Mammary epithelial cell (primary cell): ENCODE measurements at regions of chr11 and their contacts with region 1.

Region 1: DNA sequence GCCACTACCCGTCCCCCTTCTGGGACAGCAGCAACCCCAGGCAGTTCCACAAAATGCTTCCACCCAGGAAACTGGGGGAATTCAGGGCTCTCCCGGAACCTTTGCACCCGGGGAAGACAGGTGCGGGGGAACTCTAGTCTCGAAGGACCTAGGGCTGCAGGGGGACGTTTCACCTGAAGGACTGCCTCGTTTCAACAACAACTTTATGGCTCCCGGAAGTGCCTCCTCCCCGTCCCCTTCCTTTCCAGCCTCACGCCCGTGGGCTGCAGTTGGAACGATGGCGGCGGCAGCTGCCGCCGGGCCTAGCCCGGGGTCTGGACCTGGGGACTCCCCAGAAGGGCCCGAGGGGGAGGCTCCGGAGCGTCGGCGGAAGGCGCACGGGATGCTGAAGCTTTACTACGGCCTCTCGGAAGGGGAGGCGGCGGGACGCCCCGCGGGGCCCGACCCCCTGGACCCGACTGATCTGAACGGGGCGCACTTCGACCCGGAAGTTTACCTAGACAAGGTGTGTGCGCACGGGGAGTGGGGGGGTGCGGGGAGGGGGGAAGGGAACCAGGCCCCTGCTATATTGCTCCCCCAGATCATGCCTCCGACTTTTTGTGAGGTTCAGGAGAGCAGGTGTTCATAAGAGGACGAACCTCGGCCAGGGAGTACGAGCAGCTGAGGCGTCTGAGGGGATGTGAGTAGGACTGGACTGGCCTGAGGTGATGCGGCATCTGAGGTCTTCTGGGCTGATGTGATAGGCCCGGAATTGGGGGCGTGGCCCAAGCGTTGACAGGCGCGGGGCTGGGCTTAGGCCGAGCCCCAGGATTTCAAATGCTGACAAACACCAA is at the start of gene VPS51:
- DNase-seq: peak; percentile 83
- H3K4me3 ChIP-seq: peak within 1 kb of the TSS; percentile 57 to 70 (median 61)
- H3K27ac ChIP-seq: peak within 1 kb of the TSS; percentile 50
- H3K4me1 ChIP-seq: peaks cover 9% of the 10 kb centered on the region
- H3K27me3 ChIP-seq: no peaks in the 10 kb centered on the region
- CTCF ChIP-seq: no peak
- total RNA-seq, gene VPS51: 78.4 to 125 TPM

Region 2: GRCh38 chr11:65047581-65048422 is 48.4 kb before region 1 on chr11:
- CTCF ChIA-PET with region 1: no interaction called
- dilution Hi-C with region 1: loop called (anchors 5 kb)
- in situ Hi-C with region 1: no loop called
- intact Hi-C with region 1: no loop called
- DNase-seq: no peak
- H3K4me3 ChIP-seq: no peak overlapping the region
- H3K27ac ChIP-seq: no peak overlapping the region
- H3K4me1 ChIP-seq: peaks cover 9% of the 10 kb centered on the region
- H3K27me3 ChIP-seq: no peaks in the 10 kb centered on the region
- CTCF ChIP-seq: no peak